ENCODE measurements at regions of chr19 and their contacts with region 1.

Region 1: DNA sequence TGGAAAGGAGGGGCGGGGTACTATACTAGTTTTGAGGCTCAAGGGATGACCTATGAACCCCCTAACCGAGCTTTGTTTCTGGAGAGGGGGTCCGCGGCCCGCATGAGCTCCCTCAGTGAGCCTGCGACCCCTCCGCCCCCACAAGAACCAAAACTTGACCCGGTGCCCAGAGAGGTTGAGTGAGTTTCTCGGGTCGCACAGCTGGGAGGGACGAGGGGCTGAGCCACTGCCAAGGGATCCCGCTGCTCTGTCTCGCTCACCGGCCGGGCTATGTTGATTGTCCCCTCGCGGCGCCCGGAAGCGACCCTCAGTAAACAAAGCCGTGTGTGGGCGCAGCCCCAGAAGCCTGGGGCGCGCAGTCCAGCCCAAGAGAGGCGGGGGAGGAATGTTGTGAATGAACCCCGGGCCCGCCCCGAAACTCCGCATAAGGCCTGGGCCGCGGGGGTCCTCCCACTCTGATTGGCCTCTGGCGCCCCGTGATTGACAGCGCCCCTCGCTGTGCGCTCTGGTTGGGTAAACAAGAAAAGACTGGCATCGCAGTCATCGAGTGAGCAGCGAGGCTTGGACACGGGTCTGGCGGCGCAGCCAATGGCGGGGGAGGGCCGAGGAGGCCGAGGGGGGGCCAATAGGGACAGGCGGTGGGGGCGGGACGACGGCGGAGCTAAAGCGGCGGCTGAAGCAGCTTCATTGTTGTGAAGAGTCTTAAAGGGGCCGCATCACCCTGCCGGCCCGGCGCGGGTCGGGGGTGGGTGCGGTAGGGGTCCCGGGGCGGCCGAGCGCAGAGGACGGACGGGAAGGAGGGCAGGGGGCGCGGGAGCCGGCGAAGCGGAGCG is at the start of gene ZSWIM4:
- DNase-seq: peak; percentile 79 to 97 (median 87)
- ATAC-seq: peak; percentile 94 to 95
- H3K4me3 Mint-ChIP-seq: peak within 1 kb of the TSS; percentile 95 to 100 (median 97)
- H3K27ac Mint-ChIP-seq: peak within 1 kb of the TSS; percentile 91 to 98 (median 96)
- H3K4me1 Mint-ChIP-seq: peaks cover 19 to 38% (median 35%) of the 10 kb centered on the region in 4 donors
- H3K27me3 Mint-ChIP-seq: no peaks in the 10 kb centered on the region
- polyA plus RNA-seq, gene ZSWIM4: 0.30 to 1.5 (median 1.1) TPM

Region 2: GRCh38 chr19:13681509-13681908 is 113.5 kb before region 1 on chr19:
- POLR2A ChIA-PET with region 1: no interaction called
- DNase-seq: no peak
- ATAC-seq: no peak
- H3K4me3 Mint-ChIP-seq: no peak overlapping the region
- H3K27ac Mint-ChIP-seq: peak overlapping the region in 1 of 10 donors; percentile 44
- H3K4me1 Mint-ChIP-seq: peaks cover 4 to 7% (median 6%) of the 10 kb centered on the region in 4 donors
- H3K27me3 Mint-ChIP-seq: peaks cover 2 to 38% (median 10%) of the 10 kb centered on the region in 5 donors

Region 3: GRCh38 chr19:13748169-13748828 is 46.7 kb before region 1 on chr19:
- POLR2A ChIA-PET with region 1: interaction called, 12 read pairs
- DNase-seq: peak in 1 of 10 donors; percentile 28
- ATAC-seq: peak; percentile 13 to 28
- H3K4me3 Mint-ChIP-seq: peak overlapping the region; percentile 86 to 92 (median 90)
- H3K27ac Mint-ChIP-seq: peak overlapping the region; percentile 84 to 98 (median 94)
- H3K4me1 Mint-ChIP-seq: peaks cover 10 to 44% (median 30%) of the 10 kb centered on the region in 4 donors
- H3K27me3 Mint-ChIP-seq: no peaks in the 10 kb centered on the region

Region 4: DNA sequence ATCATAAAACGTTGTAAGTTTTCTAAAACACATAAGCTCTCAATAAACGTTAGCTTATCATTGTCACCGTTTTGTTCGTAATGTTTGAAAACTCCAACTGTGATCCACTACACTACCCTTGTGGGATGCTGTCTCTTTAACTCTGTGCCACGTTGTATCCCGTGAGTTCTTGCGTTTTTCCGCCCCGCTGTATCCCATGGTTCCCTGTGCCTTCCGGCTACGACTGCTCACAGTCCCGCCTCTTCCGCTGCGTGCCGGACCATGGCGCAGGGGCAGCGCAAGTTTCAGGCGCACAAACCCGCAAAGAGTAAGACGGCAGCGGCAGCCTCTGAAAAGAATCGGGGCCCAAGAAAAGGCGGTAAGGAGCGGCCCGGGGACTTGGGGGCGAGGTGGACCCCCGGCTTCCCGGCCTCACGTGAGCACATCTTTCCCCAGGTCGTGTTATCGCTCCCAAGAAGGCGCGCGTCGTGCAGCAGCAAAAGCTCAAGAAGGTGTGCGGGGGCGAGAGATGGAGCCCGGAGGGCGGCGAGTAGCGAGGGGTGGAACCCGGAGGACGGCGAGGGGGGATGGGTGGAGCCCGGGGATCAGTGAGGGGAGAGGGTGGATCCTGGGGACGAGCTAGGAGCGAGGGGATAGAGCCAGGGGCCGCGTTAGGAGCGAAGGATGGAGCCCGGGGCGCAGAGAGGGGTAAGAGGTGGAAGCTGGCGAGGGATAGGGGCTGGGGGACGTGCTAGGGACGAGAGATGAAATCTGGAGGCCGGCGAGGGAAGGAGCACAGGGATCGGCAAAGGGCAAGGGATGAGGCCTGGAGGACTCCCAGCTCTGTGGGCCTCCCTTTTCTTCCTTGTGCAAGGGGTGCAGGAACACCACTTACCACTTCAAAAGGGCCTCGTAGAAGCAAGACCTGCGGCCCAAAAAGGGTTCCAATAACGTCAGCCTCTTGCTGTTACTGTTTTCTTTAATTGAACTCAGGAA is 20.5 kb before region 1 on chr19 and contains the start of gene C19orf53:
- POLR2A ChIA-PET with region 1: interaction called, 39 read pairs
- DNase-seq: peak; percentile 73 to 93 (median 84)
- ATAC-seq: peak; percentile 89 to 91
- H3K4me3 Mint-ChIP-seq: peak within 1 kb of the TSS; percentile 98 to 100 (median 100)
- H3K27ac Mint-ChIP-seq: peak within 1 kb of the TSS; percentile 96 to 100 (median 99)
- H3K4me1 Mint-ChIP-seq: peaks cover 18 to 44% (median 30%) of the 10 kb centered on the region in 4 donors
- H3K27me3 Mint-ChIP-seq: no peaks in the 10 kb centered on the region
- polyA plus RNA-seq, gene C19orf53: 248 to 324 (median 278) TPM

Region 5: GRCh38 chr19:13784731-13785452 is 10.1 kb before region 1 on chr19:
- POLR2A ChIA-PET with region 1: interaction called, 15 read pairs
- DNase-seq: peak; percentile 50 to 84 (median 68)
- ATAC-seq: peak; percentile 65 to 75
- H3K4me3 Mint-ChIP-seq: peak overlapping the region; percentile 43 to 79 (median 69)
- H3K27ac Mint-ChIP-seq: peak overlapping the region; percentile 71 to 92 (median 85)
- H3K4me1 Mint-ChIP-seq: peaks cover 13 to 43% (median 33%) of the 10 kb centered on the region in 4 donors
- H3K27me3 Mint-ChIP-seq: no peaks in the 10 kb centered on the region

Region 6: DNA sequence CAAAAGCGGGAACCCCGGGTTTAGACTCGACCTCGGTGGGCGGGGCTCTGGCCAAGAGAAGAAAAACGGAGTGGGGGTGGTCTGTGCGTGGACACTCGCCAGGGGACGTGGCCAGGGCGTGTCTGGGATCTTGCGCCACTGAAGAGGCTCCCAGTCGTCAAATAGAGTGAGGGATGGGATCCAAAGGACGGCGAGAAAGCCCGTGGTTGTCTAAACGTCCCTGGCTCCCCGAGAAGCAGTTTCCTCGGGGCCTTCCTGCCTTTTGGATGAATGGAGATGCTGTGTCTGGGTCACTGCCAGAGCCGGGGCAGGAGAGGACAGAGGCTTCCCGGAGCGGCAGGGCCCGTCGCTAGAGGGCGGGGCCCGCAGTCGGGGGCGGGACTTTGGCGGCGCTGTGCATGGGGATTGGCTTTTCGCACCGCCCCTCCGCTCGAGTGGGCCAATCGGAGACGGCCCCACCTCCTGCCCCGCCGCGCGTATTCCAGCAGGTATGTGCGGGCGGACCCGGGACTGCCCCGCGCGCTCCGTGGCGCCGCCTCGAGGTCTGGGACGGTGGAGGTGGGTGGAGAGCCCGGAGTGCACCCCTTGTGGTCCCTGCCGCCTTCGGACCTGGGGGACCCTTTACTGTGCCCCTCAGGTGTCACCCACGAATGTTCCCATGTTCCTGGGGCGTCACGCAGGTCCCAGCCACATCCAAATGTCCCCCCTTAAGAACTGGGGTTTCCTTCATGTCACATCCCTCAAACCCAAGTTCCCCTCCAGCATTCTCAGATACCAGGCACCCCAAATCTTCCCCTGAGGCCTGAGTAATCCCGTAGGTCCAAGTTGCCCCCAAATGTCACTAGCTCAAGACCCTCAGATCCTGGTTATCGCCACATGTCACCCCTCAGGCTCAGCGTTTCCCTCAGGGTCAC is 38.6 kb after region 1 on chr19:
- POLR2A ChIA-PET with region 1: interaction called, 110 read pairs
- DNase-seq: peak; percentile 84 to 95 (median 92)
- ATAC-seq: peak; percentile 69 to 78
- H3K4me3 Mint-ChIP-seq: peak overlapping the region; percentile 82 to 94 (median 88)
- H3K27ac Mint-ChIP-seq: peak overlapping the region; percentile 84 to 99 (median 94)
- H3K4me1 Mint-ChIP-seq: peaks cover 19 to 50% (median 42%) of the 10 kb centered on the region in 4 donors
- H3K27me3 Mint-ChIP-seq: no peaks in the 10 kb centered on the region

Region 7: GRCh38 chr19:13846557-13847406 is 51.8 kb after region 1 on chr19:
- POLR2A ChIA-PET with region 1: interaction called, 110 read pairs
- DNase-seq: peak; percentile 88 to 100 (median 98)
- ATAC-seq: peak; percentile 62 to 75
- H3K4me3 Mint-ChIP-seq: peak overlapping the region; percentile 84 to 94 (median 91)
- H3K27ac Mint-ChIP-seq: peak overlapping the region; percentile 99 to 100 (median 100)
- H3K4me1 Mint-ChIP-seq: peaks cover 26 to 72% (median 56%) of the 10 kb centered on the region in 4 donors
- H3K27me3 Mint-ChIP-seq: peaks cover 0 to 4% (median 0%) of the 10 kb centered on the region in 5 donors

Region 8: DNA sequence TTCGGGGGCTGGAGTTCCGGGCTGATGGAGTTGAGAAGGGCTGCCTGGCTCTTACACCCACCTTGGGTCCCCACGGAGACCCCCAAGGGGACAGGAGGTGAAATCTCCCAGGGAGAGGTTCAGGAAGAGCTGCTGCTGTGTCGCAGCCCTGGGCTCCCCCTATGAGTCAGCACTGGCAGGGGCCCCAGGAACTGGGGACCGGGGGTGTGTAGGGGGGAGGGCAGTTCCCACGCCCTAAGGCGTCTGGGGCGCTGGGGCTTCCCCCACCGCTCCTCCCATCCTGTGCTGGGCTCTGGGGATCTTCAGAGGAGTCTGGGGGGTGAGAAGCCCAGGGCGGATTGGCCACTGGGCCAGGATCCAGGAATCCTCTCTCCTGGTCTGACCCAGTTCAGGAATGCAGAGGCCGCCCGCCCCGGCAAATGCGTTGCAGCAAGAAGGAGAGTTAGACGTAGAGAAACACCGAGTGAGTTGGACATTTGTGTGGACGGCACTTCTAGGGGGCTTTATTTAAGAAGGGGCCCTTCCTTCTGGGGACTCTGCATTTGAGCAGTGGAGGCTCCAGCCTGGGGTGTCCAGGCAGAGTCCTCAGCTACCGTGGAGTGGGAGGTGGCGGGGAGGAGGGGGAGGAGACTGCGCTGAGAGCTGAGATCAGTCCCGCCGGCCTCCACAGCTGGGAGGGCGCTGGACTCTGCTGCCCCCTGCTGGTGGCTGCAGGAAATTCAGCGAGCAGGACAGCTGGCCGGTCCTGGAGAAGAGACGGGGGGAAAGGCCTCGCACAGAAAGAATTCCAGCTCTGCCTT is 67.0 kb after region 1 on chr19:
- POLR2A ChIA-PET with region 1: interaction called, 73 read pairs
- DNase-seq: peak; percentile 70 to 91 (median 86)
- ATAC-seq: peak; percentile 81 to 86
- H3K4me3 Mint-ChIP-seq: peak overlapping the region; percentile 87 to 97 (median 92)
- H3K27ac Mint-ChIP-seq: peak overlapping the region; percentile 84 to 99 (median 96)
- H3K4me1 Mint-ChIP-seq: peaks cover 21 to 43% (median 40%) of the 10 kb centered on the region in 4 donors
- H3K27me3 Mint-ChIP-seq: peaks cover 8 to 24% (median 20%) of the 10 kb centered on the region in 5 donors